AG04449 (cell line): ENCODE measurements at regions of chr4 and their contacts with region 1.

Region 1: DNA sequence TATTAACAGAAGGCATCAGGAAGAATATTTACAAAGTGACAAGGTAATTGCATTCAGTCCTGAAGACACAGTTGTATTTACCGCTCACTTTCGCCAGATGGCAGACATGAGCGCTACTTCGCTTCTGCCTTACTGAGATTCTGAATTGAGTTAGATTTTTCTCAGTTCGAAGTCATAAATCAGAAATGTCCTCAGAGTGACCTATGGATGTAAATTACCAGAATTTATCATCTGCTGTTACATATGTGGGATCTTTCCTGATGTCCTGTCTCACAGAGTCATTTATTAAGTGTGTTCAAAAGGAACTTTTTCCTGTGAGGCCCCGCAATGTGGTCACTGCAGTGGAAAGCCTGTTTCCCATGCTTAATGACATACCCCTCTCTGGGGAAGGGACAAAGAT is 97.3 kb upstream of the DCLK2 start:
- DNase-seq: no peak
- H3K4me3 ChIP-seq: no peak overlapping the region
- CTCF ChIP-seq: peak; percentile 80

Region 2: GRCh38 chr4:149993030-149993429 is 12.1 kb after region 1 on chr4:
- CTCF ChIA-PET with region 1: interaction called, 24 read pairs
- POLR2A ChIA-PET with region 1: no interaction called
- DNase-seq: no peak
- H3K4me3 ChIP-seq: no peak overlapping the region
- CTCF ChIP-seq: no peak